ENCODE measurements at regions of chr2 and their contacts with region 1.

Region 1: DNA sequence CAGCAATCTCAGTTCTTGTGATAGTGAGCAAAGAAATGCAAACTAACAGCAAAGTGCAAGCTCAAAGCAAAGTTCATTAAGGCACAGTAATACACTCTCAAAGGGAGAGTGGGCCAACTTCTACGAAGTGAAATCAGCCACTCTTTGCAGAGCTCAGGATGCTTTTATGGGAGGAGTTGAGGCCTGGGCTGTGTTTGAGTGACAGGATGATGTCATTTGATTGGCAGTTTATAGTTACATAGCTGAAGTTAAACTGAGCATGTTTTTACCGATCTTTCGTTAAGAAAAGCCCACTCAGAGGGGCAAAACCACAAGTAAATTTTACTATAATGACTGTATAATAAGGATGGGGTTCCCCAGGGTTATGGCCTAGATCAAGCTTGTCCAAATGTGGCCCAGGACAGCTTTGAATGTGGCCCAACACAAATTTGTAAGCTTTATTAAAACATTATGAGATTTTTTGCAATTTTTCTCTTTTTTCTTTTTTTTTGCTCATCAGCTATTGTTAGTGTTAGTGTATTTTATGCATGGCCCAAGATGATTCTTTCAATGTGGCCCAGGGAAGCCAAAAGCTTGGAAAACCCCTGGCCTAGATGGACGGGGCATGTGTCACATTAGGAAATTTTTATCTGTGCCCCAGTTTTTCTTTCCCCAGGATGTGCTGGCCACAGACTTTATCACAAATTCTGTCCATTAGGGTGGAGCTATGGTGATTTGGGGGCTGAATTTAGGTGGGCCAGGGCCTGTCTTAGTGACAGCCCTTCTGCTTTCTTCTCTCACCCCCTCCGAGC is 8.3 kb upstream of the DNAH7 start:
- DNase-seq: no peak
- ATAC-seq: no peak
- H3K4me3 ChIP-seq: no peak overlapping the region
- H3K27ac ChIP-seq: no peak overlapping the region
- H3K4me1 ChIP-seq: peaks cover 0 to 18% (median 7%) of the 10 kb centered on the region in 12 donors
- H3K27me3 ChIP-seq: no peaks in the 10 kb centered on the region
- CTCF ChIP-seq: no peak
- POLR2A ChIP-seq: no peak

Region 2: GRCh38 chr2:196200557-196200956 is 123.6 kb after region 1 on chr2:
- intact Hi-C with region 1: no loop called
- DNase-seq: no peak
- ATAC-seq: no peak
- H3K4me3 ChIP-seq: peak overlapping the region in 1 of 12 donors; percentile 6
- H3K27ac ChIP-seq: peak overlapping the region in 1 of 12 donors; percentile 53
- H3K4me1 ChIP-seq: peaks cover 0 to 25% (median 12%) of the 10 kb centered on the region in 12 donors
- H3K27me3 ChIP-seq: no peaks in the 10 kb centered on the region
- CTCF ChIP-seq: no peak
- POLR2A ChIP-seq: no peak

Region 3: DNA sequence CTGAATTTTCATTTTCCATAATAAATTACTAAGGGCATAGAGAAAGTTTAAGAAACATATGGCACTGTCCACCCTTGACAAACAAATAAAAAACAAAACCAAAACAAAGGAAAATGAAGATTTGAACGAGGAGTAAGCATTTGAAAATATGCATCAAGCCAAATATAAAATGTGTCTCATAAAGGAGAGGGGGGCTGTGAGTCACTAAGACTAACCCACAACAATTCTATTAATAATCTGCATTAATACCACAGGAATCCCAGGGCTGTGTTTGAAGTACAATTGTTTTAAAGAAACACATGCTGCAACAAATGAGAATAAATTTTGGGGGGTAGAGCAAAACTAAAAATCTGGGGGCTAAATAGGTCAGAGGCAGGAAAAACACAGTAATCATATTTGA is 148.2 kb after region 1 on chr2:
- intact Hi-C with region 1: loop called in 1 of 10 experiments (anchors 10 kb)
- DNase-seq: no peak
- ATAC-seq: no peak
- H3K4me3 ChIP-seq: no peak overlapping the region
- H3K27ac ChIP-seq: no peak overlapping the region
- H3K4me1 ChIP-seq: peaks cover 0 to 28% (median 0%) of the 10 kb centered on the region in 12 donors
- H3K27me3 ChIP-seq: no peaks in the 10 kb centered on the region
- CTCF ChIP-seq: no peak
- POLR2A ChIP-seq: no peak

Region 4: GRCh38 chr2:196277002-196277401 is 200.0 kb after region 1 on chr2:
- intact Hi-C with region 1: loop called in 8 of 10 experiments (anchors 2 to 10 kb)
- DNase-seq: no peak
- ATAC-seq: no peak
- H3K4me3 ChIP-seq: no peak overlapping the region
- H3K27ac ChIP-seq: no peak overlapping the region
- H3K4me1 ChIP-seq: peaks cover 0 to 40% (median 12%) of the 10 kb centered on the region in 12 donors
- H3K27me3 ChIP-seq: no peaks in the 10 kb centered on the region
- CTCF ChIP-seq: peak; percentile 30 to 62 (median 49)
- POLR2A ChIP-seq: no peak

Region 5: DNA sequence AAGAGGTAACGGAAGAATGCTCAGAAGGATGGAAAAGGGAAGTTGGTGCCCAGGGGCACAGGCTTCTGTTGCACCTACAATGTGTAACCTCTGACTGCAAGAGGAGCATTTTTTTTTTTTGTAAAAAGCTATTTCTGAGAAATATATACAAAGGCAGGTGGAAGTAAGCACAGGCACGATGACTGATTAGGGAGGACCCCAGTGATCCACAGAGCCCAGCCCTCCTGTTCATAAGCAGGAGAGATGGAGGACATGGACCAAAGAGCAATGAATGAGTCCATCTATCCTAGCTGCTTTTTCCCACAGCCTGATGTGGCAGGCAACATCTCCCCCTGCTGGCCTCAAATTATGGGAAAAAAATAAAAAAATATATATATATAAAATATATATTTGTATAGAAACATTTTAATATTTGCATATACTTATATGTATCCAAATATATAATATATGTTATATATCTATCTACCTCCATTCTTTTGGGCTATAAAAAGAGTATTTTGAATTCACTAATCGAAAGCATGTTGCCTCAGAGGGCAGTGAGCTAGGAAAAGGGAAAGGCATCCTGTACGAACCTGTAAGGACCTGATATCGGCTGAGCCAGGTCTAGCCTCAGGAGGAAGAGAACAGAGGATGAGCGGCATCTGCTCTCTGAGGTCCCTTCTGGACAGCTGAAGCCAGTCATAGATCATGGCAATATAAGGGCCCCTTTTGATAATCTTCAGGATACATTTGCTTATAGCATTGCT is 260.4 kb after region 1 on chr2:
- intact Hi-C with region 1: loop called in 5 of 10 experiments (anchors 5 kb)
- DNase-seq: no peak
- ATAC-seq: peak in 1 of 4 donors; percentile 42
- H3K4me3 ChIP-seq: no peak overlapping the region
- H3K27ac ChIP-seq: no peak overlapping the region
- H3K4me1 ChIP-seq: peaks cover 0 to 50% (median 9%) of the 10 kb centered on the region in 12 donors
- H3K27me3 ChIP-seq: no peaks in the 10 kb centered on the region
- CTCF ChIP-seq: peak; percentile 17 to 62 (median 46)
- POLR2A ChIP-seq: no peak

Region 6: GRCh38 chr2:196758474-196759377 is 681.8 kb after region 1 on chr2:
- intact Hi-C with region 1: loop called in 5 of 10 experiments (anchors 5 to 10 kb)
- DNase-seq: no peak
- ATAC-seq: peak in 3 of 4 donors; percentile 57 to 81 (median 58)
- H3K4me3 ChIP-seq: no peak overlapping the region
- H3K27ac ChIP-seq: no peak overlapping the region
- H3K4me1 ChIP-seq: peaks cover 0 to 11% (median 0%) of the 10 kb centered on the region in 12 donors
- H3K27me3 ChIP-seq: no peaks in the 10 kb centered on the region
- CTCF ChIP-seq: peak in 11 of 12 donors; percentile 26 to 57 (median 40)
- POLR2A ChIP-seq: no peak

Measured in heart left ventricle (tissue), 16 donors.